ENCODE measurements at regions of chr1 and their contacts with region 1.

Region 1: DNA sequence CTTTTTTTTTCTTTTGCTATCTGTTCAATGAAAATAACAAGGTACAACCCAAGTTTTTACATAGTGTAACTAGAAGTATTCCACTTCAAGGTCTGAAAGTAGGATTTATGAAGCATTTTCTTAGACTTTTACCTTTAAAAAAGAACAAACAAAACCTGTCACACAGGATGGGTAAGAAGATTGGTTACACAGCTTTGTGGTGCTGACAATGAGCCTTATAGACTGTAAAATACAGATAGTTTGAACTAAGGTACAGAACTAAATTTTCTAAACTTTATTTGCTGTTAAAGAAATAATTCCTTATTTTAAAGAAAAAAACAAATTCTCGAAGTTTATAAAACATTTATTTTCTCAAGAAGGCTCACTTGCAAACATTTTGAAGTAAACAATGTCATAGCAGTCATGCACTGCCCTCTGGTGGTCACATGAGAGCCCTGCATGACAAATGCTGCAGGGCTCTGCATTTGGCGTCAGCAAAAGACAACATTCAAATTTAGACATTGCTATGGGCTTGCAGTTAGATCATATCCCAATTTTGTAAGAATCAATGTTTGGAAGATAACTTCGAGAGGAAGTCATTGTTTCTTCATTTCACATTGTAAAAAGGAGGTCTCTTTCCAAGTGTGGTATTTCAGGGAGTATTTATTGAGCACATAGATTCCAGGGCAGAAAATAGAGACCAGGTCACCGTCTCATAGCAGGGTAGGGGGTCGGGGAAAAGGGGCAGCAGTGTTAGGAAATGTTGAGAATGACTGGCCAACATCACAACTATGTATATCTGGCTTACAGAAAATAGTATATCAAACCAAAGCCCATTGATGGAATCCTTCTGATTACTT is 115.3 kb upstream of the FMN2 start:
- DNase-seq: no peak
- ATAC-seq: peak; percentile 83
- H3K4me3 ChIP-seq: no peak overlapping the region
- H3K27ac ChIP-seq: no peak overlapping the region
- H3K4me1 ChIP-seq: no peaks in the 10 kb centered on the region
- H3K27me3 ChIP-seq: no peaks in the 10 kb centered on the region
- CTCF ChIP-seq: peak; percentile 84 to 97 (median 89)
- EP300 ChIP-seq: no peak
- POLR2A ChIP-seq: no peak
- RAD21 ChIP-seq: peak; percentile 65

Region 2: DNA sequence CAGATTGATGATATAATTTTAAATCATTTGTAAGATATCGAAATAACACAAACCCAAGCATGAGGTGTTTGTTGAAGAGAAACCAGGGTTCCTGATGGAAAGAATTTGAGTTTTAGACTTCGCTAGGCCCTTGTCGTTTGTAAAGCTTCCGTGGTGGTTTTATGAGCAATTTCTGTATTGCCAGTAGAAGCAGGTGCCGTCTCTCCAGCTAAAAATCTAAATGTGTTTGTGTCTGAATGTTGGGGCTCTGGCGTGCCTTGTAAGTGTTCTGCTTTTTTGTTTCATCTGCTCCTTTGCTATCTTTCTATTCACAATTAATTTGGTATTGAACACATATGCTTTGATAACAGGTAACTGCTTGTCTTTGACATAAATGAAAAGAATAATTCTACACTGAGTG is 562.4 kb before region 1 on chr1:
- CTCF ChIA-PET with region 1: no interaction called
- POLR2A ChIA-PET with region 1: no interaction called
- RAD21 ChIA-PET with region 1: no interaction called
- SMC1A ChIA-PET with region 1: no interaction called
- in situ Hi-C with region 1: no loop called
- intact Hi-C with region 1: loop called (anchors 10 kb)
- DNase-seq: no peak
- ATAC-seq: no peak
- H3K4me3 ChIP-seq: no peak overlapping the region
- H3K27ac ChIP-seq: no peak overlapping the region
- H3K4me1 ChIP-seq: no peaks in the 10 kb centered on the region
- H3K27me3 ChIP-seq: no peaks in the 10 kb centered on the region
- CTCF ChIP-seq: no peak
- EP300 ChIP-seq: no peak
- POLR2A ChIP-seq: no peak
- RAD21 ChIP-seq: no peak

Region 3: DNA sequence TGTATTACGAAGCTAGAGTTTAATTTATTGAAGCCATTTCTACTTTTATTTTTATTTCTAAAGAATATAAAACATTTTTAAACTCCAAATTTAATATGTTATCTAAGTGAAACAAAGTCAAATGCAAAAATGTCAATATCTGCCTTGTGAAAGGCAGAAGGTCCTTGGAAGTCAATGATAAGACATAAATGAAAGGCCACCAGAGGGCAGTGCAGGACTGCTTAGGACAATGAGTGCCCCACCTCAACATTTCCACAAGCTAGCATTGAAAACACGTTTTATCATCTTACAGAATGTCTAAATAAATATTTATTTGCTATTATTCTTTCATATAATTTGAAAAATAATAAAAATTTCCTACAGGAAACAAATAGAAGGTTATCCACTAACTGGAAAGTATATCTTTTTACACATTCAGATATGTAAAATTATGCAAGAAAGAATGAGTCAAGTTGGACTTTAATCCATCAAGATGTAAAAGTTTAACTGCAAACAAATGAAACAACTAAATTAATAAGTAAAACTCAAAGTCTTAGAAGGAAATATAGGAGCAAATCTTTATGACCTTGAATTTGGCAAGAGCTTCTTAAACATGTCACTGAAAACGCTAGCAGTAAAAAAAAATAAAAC is 24.7 kb before region 1 on chr1:
- CTCF ChIA-PET with region 1: interaction called, 35 read pairs
- POLR2A ChIA-PET with region 1: no interaction called
- RAD21 ChIA-PET with region 1: interaction called, 4 read pairs
- SMC1A ChIA-PET with region 1: interaction called, 8 read pairs
- in situ Hi-C with region 1: no loop called
- intact Hi-C with region 1: loop called (anchors 1 kb)
- DNase-seq: no peak
- ATAC-seq: peak; percentile 84
- H3K4me3 ChIP-seq: no peak overlapping the region
- H3K27ac ChIP-seq: no peak overlapping the region
- H3K4me1 ChIP-seq: no peaks in the 10 kb centered on the region
- H3K27me3 ChIP-seq: no peaks in the 10 kb centered on the region
- CTCF ChIP-seq: peak; percentile 63 to 71 (median 65)
- EP300 ChIP-seq: no peak
- POLR2A ChIP-seq: no peak
- RAD21 ChIP-seq: peak; percentile 76

Region 4: DNA sequence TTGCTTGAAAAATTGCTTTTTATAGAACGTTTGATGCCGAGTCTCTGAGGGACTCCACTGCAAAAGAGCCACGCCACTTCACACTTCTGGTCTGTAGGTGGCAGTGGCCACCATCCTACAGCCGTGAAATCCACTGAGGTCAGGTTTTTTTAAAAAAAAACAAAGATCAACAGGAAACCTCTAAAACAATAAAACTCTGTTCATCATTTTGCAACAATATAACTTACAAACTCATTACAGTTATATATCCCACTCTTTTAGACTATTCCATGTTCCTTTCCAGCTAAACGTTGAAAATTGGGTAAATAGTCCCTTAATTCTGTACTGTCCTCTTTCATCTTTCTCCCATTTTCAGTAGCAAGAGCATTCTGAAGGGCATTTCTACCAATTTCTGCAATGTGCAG is 50.7 kb after region 1 on chr1:
- CTCF ChIA-PET with region 1: no interaction called
- POLR2A ChIA-PET with region 1: no interaction called
- RAD21 ChIA-PET with region 1: no interaction called
- SMC1A ChIA-PET with region 1: no interaction called
- in situ Hi-C with region 1: no loop called
- intact Hi-C with region 1: no loop called
- DNase-seq: no peak
- ATAC-seq: peak; percentile 88
- H3K4me3 ChIP-seq: no peak overlapping the region
- H3K27ac ChIP-seq: no peak overlapping the region
- H3K4me1 ChIP-seq: no peaks in the 10 kb centered on the region
- H3K27me3 ChIP-seq: no peaks in the 10 kb centered on the region
- CTCF ChIP-seq: peak; percentile 66 to 69 (median 67)
- EP300 ChIP-seq: no peak
- POLR2A ChIP-seq: no peak
- RAD21 ChIP-seq: peak; percentile 70

Measured in GM12878 (cell line).